ENCODE measurements at regions of chr14 and their contacts with region 1.

Region 1: GRCh38 chr14:74018586-74019407 is at the starts of genes BBOF1 and ENTPD5:
- DNase-seq: peak; percentile 68 to 96 (median 84)
- ATAC-seq: peak; percentile 93
- H3K4me3 ChIP-seq: peak within 1 kb of the TSS; percentile 89
- H3K4me3 Mint-ChIP-seq: peak within 1 kb of the TSS; percentile 98
- H3K27ac ChIP-seq: peak within 1 kb of the TSS; percentile 75 to 87
- H3K27ac Mint-ChIP-seq: peak within 1 kb of the TSS; percentile 95
- H3K4me1 ChIP-seq: peaks cover 16% of the 10 kb centered on the region
- H3K4me1 Mint-ChIP-seq: peaks cover 22% of the 10 kb centered on the region
- H3K27me3 ChIP-seq: no peaks in the 10 kb centered on the region
- H3K27me3 Mint-ChIP-seq: no peaks in the 10 kb centered on the region
- CTCF ChIP-seq: no peak
- total RNA-seq, gene BBOF1: 1.8 to 2.4 TPM
- total RNA-seq, gene ENTPD5: 5.5 to 7.1 TPM

Region 2: DNA sequence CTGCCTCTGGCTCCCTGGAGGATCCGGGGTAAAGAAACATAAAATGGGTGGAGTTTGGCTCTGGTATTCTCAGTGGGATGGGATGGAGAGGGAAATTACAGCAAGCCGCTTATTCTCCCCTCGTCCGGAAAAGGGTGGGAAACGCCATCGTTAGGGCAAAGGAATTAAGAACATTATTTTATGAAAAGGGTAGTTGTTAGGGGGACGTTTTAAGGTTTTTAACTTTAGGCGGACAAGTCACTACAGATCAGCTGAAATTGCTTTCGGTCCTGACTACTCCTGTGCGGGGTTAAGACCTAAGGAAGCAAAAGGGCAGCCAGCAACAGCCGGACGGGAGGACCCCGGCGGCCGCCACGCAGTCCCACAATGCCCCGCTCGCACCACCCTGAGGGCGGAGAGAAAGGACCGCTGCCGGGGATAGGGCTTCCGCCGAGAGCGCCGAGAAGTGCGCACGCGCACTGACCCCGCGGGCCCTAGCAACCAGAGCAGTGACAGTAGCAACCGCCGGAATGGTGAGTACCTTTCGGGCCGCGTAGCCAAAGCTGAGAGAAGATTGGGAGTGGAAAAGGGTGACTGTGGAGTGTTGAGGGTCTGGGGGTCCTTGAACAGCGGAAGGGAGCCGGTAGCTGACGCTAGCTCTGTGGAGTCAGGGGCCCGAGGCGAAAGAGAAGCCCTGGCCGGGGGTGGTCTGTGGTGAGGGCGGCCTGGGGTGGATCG is 374.1 kb before region 1 on chr14 and contains the start of gene DNAL1:
- CTCF ChIA-PET with region 1: no interaction called
- POLR2A ChIA-PET with region 1: no interaction called
- intact Hi-C with region 1: loop called in 1 of 2 experiments (anchors 10 kb)
- DNase-seq: peak; percentile 82 to 96 (median 88)
- ATAC-seq: peak; percentile 99
- H3K4me3 ChIP-seq: peak within 1 kb of the TSS; percentile 88
- H3K4me3 Mint-ChIP-seq: peak within 1 kb of the TSS; percentile 91
- H3K27ac ChIP-seq: peak within 1 kb of the TSS; percentile 39 to 63
- H3K27ac Mint-ChIP-seq: peak within 1 kb of the TSS; percentile 76
- H3K4me1 ChIP-seq: peaks cover 13% of the 10 kb centered on the region
- H3K4me1 Mint-ChIP-seq: peaks cover 20% of the 10 kb centered on the region
- H3K27me3 ChIP-seq: no peaks in the 10 kb centered on the region
- H3K27me3 Mint-ChIP-seq: no peaks in the 10 kb centered on the region
- CTCF ChIP-seq: no peak
- total RNA-seq, gene DNAL1: 2.9 to 3.7 TPM

Region 3: GRCh38 chr14:73713803-73714655 is 304.8 kb before region 1 on chr14 and contains the start of gene PNMA1:
- CTCF ChIA-PET with region 1: no interaction called
- POLR2A ChIA-PET with region 1: interaction called, 3 read pairs
- intact Hi-C with region 1: loop called (anchors 5 kb)
- DNase-seq: peak; percentile 75 to 95 (median 82)
- ATAC-seq: peak; percentile 68
- H3K4me3 ChIP-seq: peak within 1 kb of the TSS; percentile 87
- H3K4me3 Mint-ChIP-seq: peak within 1 kb of the TSS; percentile 96
- H3K27ac ChIP-seq: peak within 1 kb of the TSS; percentile 73 to 77
- H3K27ac Mint-ChIP-seq: peak within 1 kb of the TSS; percentile 92
- H3K4me1 ChIP-seq: peaks cover 33% of the 10 kb centered on the region
- H3K4me1 Mint-ChIP-seq: peaks cover 33% of the 10 kb centered on the region
- H3K27me3 ChIP-seq: no peaks in the 10 kb centered on the region
- H3K27me3 Mint-ChIP-seq: no peaks in the 10 kb centered on the region
- CTCF ChIP-seq: no peak
- total RNA-seq, gene PNMA1: 52.6 to 55.9 TPM

Region 4: DNA sequence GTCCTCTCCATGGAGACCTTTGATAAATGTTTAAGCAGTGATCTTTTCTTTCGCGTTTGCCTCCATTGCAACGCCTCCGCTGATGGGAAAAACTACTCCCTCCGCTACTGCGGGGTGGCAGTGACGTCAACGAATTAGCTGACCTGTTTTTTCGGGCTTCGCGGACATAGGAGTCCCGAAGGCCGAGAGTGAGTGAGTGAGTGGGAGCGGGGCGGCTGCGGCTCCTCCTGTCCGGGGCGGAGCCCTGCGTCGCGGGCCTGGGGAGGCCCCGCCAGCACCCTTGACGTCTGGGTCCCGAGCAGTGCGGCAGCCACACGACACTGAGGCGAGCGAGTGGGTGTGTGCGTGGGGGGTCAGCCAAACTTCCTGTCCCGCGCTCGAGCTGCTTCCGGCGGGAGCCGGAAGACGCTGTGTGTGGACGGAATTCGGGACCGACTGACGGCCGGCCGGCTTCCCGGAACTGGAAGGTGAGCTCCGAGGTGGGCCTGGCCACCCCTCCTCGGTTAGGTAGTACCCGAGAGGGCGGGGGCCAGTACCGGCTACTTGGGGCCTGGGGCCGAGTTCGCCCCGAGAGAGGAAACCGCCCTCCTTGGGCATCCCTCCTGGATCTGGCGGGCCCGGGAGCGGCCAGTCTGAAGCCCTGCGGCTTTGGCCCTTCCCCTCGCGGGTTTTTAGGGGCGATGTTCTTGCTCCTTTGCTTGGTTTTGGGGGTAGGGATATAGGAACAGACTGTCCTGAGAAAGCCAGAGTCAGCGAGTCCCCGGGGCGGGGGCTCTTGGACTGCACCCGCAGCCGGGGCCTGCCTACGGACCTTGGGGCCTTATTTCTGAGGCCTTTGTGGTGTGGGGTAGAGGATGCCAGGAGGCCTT is 132.1 kb before region 1 on chr14 and contains the start of gene ZNF410:
- CTCF ChIA-PET with region 1: no interaction called
- POLR2A ChIA-PET with region 1: interaction called, 10 read pairs
- intact Hi-C with region 1: loop called in 1 of 2 experiments (anchors 2 kb)
- DNase-seq: peak; percentile 66 to 96 (median 78)
- ATAC-seq: peak; percentile 97
- H3K4me3 ChIP-seq: peak within 1 kb of the TSS; percentile 98
- H3K4me3 Mint-ChIP-seq: peak within 1 kb of the TSS; percentile 98
- H3K27ac ChIP-seq: peak within 1 kb of the TSS; percentile 93 to 98
- H3K27ac Mint-ChIP-seq: peak within 1 kb of the TSS; percentile 94
- H3K4me1 ChIP-seq: peaks cover 21% of the 10 kb centered on the region
- H3K4me1 Mint-ChIP-seq: peaks cover 49% of the 10 kb centered on the region
- H3K27me3 ChIP-seq: no peaks in the 10 kb centered on the region
- H3K27me3 Mint-ChIP-seq: no peaks in the 10 kb centered on the region
- CTCF ChIP-seq: no peak
- total RNA-seq, gene ZNF410: 74.3 to 81.1 TPM

Region 5: DNA sequence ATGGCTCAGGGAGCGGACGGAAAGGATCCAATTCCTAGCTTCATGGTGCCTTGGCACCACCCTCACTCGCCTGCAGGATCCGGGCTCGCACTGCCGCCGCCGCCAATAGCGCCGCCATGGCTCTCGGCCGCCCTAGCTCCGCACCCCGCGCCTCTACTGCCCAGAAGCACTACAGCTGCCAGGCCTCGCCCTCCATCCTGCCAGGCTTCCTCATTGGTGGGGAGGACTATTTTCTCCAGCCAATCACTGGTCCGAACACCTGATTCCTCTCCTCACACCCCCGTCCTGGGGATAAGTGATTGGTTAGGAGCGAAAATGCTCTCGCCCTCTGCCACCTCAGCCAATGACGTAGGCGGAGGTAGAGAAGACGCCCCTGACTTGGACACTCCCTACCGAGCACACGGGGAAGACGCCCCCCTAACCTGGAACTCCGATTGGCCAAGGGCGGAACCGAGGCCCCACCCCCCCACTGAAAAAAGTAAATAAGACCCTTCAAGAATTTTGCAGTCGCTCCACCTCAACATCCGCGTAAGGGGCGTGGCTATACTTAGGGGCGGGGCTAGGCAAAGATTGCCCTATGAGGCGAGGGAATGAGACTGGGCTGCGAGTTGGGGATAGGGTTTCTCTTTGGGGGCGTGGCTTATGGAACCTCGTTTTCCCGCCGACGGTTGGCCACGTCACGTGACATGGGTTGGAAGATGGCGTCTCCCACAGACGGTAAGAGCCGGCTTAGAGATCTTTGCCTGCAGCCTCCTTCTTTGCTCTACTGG is 65.7 kb after region 1 on chr14 and contains the starts of genes ALDH6A1 and LIN52:
- CTCF ChIA-PET with region 1: no interaction called
- POLR2A ChIA-PET with region 1: interaction called, 6 read pairs
- intact Hi-C with region 1: loop called (anchors 1 to 2 kb)
- DNase-seq: peak; percentile 98 to 100 (median 100)
- ATAC-seq: peak; percentile 86
- H3K4me3 ChIP-seq: peak within 1 kb of the TSS; percentile 95
- H3K4me3 Mint-ChIP-seq: peak within 1 kb of the TSS; percentile 94
- H3K27ac ChIP-seq: peak within 1 kb of the TSS; percentile 52 to 72
- H3K27ac Mint-ChIP-seq: peak within 1 kb of the TSS; percentile 86
- H3K4me1 ChIP-seq: peaks cover 21% of the 10 kb centered on the region
- H3K4me1 Mint-ChIP-seq: peaks cover 36% of the 10 kb centered on the region
- H3K27me3 ChIP-seq: no peaks in the 10 kb centered on the region
- H3K27me3 Mint-ChIP-seq: no peaks in the 10 kb centered on the region
- CTCF ChIP-seq: no peak
- total RNA-seq, gene ALDH6A1: 5.3 to 6.2 TPM
- total RNA-seq, gene LIN52: 5.4 to 6.8 TPM

Measured in CD4-positive, alpha-beta T cell (primary cell).